Caco-2 (cell line): ENCODE measurements at regions of chr12 and their contacts with region 1.

Region 1: GRCh38 chr12:31267966-31268365 is 58.0 kb downstream of the SINHCAF start:
- DNase-seq: no peak
- H3K4me3 ChIP-seq: no peak overlapping the region
- H3K4me3 Mint-ChIP-seq: no peak overlapping the region
- H3K27ac Mint-ChIP-seq: no peak overlapping the region
- H3K4me1 ChIP-seq: no peaks in the 10 kb centered on the region
- H3K4me1 Mint-ChIP-seq: no peaks in the 10 kb centered on the region
- H3K27me3 ChIP-seq: no peaks in the 10 kb centered on the region
- H3K27me3 Mint-ChIP-seq: no peaks in the 10 kb centered on the region
- CTCF ChIP-seq: no peak

Region 2: GRCh38 chr12:31231611-31232360 is 36.2 kb before region 1 on chr12:
- CTCF ChIA-PET with region 1: interaction called, 12 read pairs
- POLR2A ChIA-PET with region 1: no interaction called
- intact Hi-C with region 1: no loop called
- DNase-seq: no peak
- H3K4me3 ChIP-seq: no peak overlapping the region
- H3K4me3 Mint-ChIP-seq: no peak overlapping the region
- H3K27ac Mint-ChIP-seq: no peak overlapping the region
- H3K4me1 ChIP-seq: 0 out of 2 replicates have a peak, but pooled peaks cover 2% of the 10 kb centered on the region
- H3K4me1 Mint-ChIP-seq: peaks cover 10% of the 10 kb centered on the region
- H3K27me3 ChIP-seq: no peaks in the 10 kb centered on the region
- H3K27me3 Mint-ChIP-seq: peaks cover 11% of the 10 kb centered on the region
- CTCF ChIP-seq: peak in 1 of 2 experiments; percentile 4

Region 3: GRCh38 chr12:31238764-31239387 is 29.1 kb before region 1 on chr12:
- CTCF ChIA-PET with region 1: interaction called, 10 read pairs
- POLR2A ChIA-PET with region 1: no interaction called
- intact Hi-C with region 1: no loop called
- DNase-seq: peak; percentile 81 to 84
- H3K4me3 ChIP-seq: no peak overlapping the region
- H3K4me3 Mint-ChIP-seq: no peak overlapping the region
- H3K27ac Mint-ChIP-seq: no peak overlapping the region
- H3K4me1 ChIP-seq: no peaks in the 10 kb centered on the region
- H3K4me1 Mint-ChIP-seq: peaks cover 10% of the 10 kb centered on the region
- H3K27me3 ChIP-seq: no peaks in the 10 kb centered on the region
- H3K27me3 Mint-ChIP-seq: peaks cover 17% of the 10 kb centered on the region
- CTCF ChIP-seq: peak; percentile 83 to 87

Region 4: GRCh38 chr12:31245822-31246469 is 22.0 kb before region 1 on chr12:
- CTCF ChIA-PET with region 1: interaction called, 31 read pairs
- POLR2A ChIA-PET with region 1: no interaction called
- intact Hi-C with region 1: loop called (anchors 1 kb)
- DNase-seq: peak in 1 of 2 experiments; percentile 46
- H3K4me3 ChIP-seq: no peak overlapping the region
- H3K4me3 Mint-ChIP-seq: no peak overlapping the region
- H3K27ac Mint-ChIP-seq: no peak overlapping the region
- H3K4me1 ChIP-seq: no peaks in the 10 kb centered on the region
- H3K4me1 Mint-ChIP-seq: no peaks in the 10 kb centered on the region
- H3K27me3 ChIP-seq: no peaks in the 10 kb centered on the region
- H3K27me3 Mint-ChIP-seq: peaks cover 3% of the 10 kb centered on the region
- CTCF ChIP-seq: peak; percentile 36 to 39

Region 5: GRCh38 chr12:31362759-31363415 is 94.9 kb after region 1 on chr12:
- CTCF ChIA-PET with region 1: interaction called, 10 read pairs
- POLR2A ChIA-PET with region 1: no interaction called
- intact Hi-C with region 1: no loop called
- DNase-seq: peak; percentile 73 to 87
- H3K4me3 ChIP-seq: no peak overlapping the region
- H3K4me3 Mint-ChIP-seq: peak overlapping the region; percentile 50
- H3K27ac Mint-ChIP-seq: peak overlapping the region; percentile 82
- H3K4me1 ChIP-seq: peaks cover 24% of the 10 kb centered on the region
- H3K4me1 Mint-ChIP-seq: peaks cover 33% of the 10 kb centered on the region
- H3K27me3 ChIP-seq: no peaks in the 10 kb centered on the region
- H3K27me3 Mint-ChIP-seq: no peaks in the 10 kb centered on the region
- CTCF ChIP-seq: no peak